ENCODE measurements at regions of chr21 and their contacts with region 1.

Region 1: GRCh38 chr21:46234496-46234895 is 5.9 kb upstream of the LSS start:
- DNase-seq: no peak
- H3K4me3 Mint-ChIP-seq: no peak overlapping the region
- H3K27ac Mint-ChIP-seq: no peak overlapping the region
- H3K4me1 Mint-ChIP-seq: peaks cover 17% of the 10 kb centered on the region
- H3K27me3 Mint-ChIP-seq: no peaks in the 10 kb centered on the region
- CTCF ChIP-seq: no peak

Region 2: GRCh38 chr21:46285761-46286496 is 51.4 kb after region 1 on chr21 and contains the start of gene YBEY:
- CTCF ChIA-PET with region 1: interaction called, 5 read pairs
- POLR2A ChIA-PET with region 1: interaction called, 13 read pairs
- intact Hi-C with region 1: no loop called
- DNase-seq: peak; percentile 89
- H3K4me3 Mint-ChIP-seq: peak within 1 kb of the TSS; percentile 82
- H3K27ac Mint-ChIP-seq: peak within 1 kb of the TSS; percentile 74
- H3K4me1 Mint-ChIP-seq: peaks cover 15% of the 10 kb centered on the region
- H3K27me3 Mint-ChIP-seq: no peaks in the 10 kb centered on the region
- CTCF ChIP-seq: peak; percentile 20
- total RNA-seq, gene YBEY: 26.7 and 29.9 TPM in 2 replicates

Measured in MCF 10A (cell line).